ENCODE measurements at regions of chr5 and their contacts with region 1.

Region 1: GRCh38 chr5:155049569-155050383 is 36.2 kb downstream of the KIF4B start:
- DNase-seq: peak; percentile 89
- H3K4me3 ChIP-seq: no peak overlapping the region
- H3K27ac ChIP-seq: peak overlapping the region; percentile 93
- H3K4me1 ChIP-seq: peaks cover 68% of the 10 kb centered on the region
- H3K27me3 ChIP-seq: no peaks in the 10 kb centered on the region
- CTCF ChIP-seq: peak; percentile 68

Region 2: DNA sequence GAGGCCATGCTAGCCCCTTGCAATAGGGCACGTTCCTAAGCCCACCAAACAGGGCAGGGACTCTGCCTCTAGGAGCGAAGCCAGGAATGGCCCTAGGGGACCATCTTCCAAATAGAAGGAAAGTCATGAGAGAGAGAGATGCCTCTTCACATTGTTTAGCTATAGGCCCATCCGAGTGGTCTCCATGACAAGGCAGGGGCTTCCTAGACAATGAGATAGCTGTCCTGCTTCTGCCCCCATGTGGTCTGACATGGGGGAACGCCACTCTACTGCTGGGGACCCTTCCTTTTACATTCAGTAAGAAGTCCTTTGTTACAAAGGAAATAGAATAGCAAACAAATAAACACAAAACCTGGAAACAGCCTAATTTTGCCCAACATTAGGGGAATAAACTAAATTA is 54.1 kb before region 1 on chr5:
- CTCF ChIA-PET with region 1: no interaction called
- POLR2A ChIA-PET with region 1: interaction called, 19 read pairs
- intact Hi-C with region 1: loop called (anchors 1 kb)
- DNase-seq: peak; percentile 56
- H3K4me3 ChIP-seq: no peak overlapping the region
- H3K27ac ChIP-seq: peak overlapping the region; percentile 75
- H3K4me1 ChIP-seq: peaks cover 35% of the 10 kb centered on the region
- H3K27me3 ChIP-seq: no peaks in the 10 kb centered on the region
- CTCF ChIP-seq: peak; percentile 55

Region 3: GRCh38 chr5:155091768-155092717 is 42.3 kb after region 1 on chr5:
- CTCF ChIA-PET with region 1: no interaction called
- POLR2A ChIA-PET with region 1: interaction called, 23 read pairs
- intact Hi-C with region 1: no loop called
- DNase-seq: peak; percentile 14
- H3K4me3 ChIP-seq: no peak overlapping the region
- H3K27ac ChIP-seq: no peak overlapping the region
- H3K4me1 ChIP-seq: peaks cover 7% of the 10 kb centered on the region
- H3K27me3 ChIP-seq: no peaks in the 10 kb centered on the region
- CTCF ChIP-seq: no peak